ENCODE measurements at regions of chr22 and their contacts with region 1.

Region 1: DNA sequence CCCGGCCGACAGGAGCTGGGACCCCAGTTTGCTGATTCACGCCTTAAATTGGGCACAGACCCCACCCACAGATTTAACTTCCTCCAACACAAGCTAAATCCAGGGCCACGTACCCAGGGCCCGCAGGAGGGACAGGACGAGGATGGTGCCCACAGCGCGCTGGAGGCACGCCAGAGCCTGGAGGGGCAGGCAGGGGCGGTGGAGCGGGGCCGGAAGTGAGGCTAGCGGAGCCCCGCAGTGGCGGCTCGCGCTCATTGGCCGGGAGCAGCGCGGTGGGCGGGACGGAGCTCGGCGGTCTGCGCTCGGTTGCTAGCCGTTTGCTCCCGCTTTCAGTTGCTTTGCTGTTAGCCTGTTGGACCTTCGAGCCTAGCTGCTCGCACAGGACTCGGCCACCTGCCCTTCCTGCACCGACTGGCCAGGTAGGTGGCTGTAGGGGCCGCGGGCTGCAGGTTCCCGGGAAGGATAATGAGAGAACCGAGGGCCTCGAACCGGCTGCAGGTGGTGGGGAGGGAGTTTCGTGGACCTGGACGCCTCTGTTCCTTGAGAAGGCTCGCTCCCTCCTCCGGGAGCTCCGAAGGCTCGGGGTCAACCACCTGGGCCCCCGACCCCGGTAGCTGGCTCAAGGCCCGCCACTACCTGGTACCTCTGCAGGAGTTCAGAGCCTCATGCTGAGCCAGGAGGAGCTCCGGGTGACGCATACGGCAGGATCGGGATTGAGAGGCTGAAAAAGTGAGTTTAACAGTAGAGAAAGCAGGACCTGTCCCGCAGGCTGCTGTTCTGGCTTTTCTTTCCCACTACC is at the start of gene CCDC134:
- DNase-seq: peak; percentile 94
- ATAC-seq: peak; percentile 97
- H3K4me3 Mint-ChIP-seq: peak within 1 kb of the TSS; percentile 98
- H3K27ac Mint-ChIP-seq: peak within 1 kb of the TSS; percentile 97
- H3K4me1 Mint-ChIP-seq: peaks cover 40% of the 10 kb centered on the region
- H3K27me3 Mint-ChIP-seq: no peaks in the 10 kb centered on the region
- total RNA-seq, gene CCDC134: 28.2 to 29.2 TPM

Region 2: GRCh38 chr22:41697126-41697775 is 103.3 kb before region 1 on chr22:
- POLR2A ChIA-PET with region 1: interaction called, 15 read pairs
- DNase-seq: peak; percentile 96
- ATAC-seq: peak; percentile 65
- H3K4me3 Mint-ChIP-seq: peak overlapping the region; percentile 24
- H3K27ac Mint-ChIP-seq: peak overlapping the region; percentile 77
- H3K4me1 Mint-ChIP-seq: peaks cover 12% of the 10 kb centered on the region
- H3K27me3 Mint-ChIP-seq: peaks cover 3% of the 10 kb centered on the region

Region 3: DNA sequence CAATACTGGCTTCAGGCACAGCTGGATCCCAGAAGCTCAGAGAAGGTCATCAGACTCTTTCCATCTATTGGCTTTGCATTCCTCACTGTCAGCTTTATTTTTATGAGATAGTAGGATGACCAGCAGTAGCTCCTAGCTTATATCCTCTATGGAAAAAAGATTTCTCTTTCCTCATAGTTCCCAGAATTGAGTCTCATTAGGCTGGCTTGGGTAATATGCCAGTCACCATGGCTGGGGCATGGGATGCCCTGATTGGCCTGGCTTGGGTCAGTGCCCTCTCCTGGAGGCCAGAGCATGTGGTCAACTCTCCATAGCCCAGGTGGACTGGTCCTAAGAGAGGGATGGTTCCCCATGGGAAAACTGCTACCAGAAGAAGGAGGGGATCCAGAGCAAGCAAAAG is 14.1 kb before region 1 on chr22:
- POLR2A ChIA-PET with region 1: interaction called, 250 read pairs
- DNase-seq: no peak
- ATAC-seq: no peak
- H3K4me3 Mint-ChIP-seq: no peak overlapping the region
- H3K27ac Mint-ChIP-seq: no peak overlapping the region
- H3K4me1 Mint-ChIP-seq: peaks cover 26% of the 10 kb centered on the region
- H3K27me3 Mint-ChIP-seq: no peaks in the 10 kb centered on the region

Region 4: GRCh38 chr22:41940832-41941765 is 140.6 kb after region 1 on chr22:
- POLR2A ChIA-PET with region 1: interaction called, 25 read pairs
- DNase-seq: peak; percentile 88
- ATAC-seq: peak; percentile 75
- H3K4me3 Mint-ChIP-seq: peak overlapping the region; percentile 18
- H3K27ac Mint-ChIP-seq: peak overlapping the region; percentile 91
- H3K4me1 Mint-ChIP-seq: peaks cover 44% of the 10 kb centered on the region
- H3K27me3 Mint-ChIP-seq: no peaks in the 10 kb centered on the region

Measured in activated naive CD8-positive, alpha-beta T cell treated with anti-CD3 and anti-CD28 coated beads, Interleukin-2, amount 10 ng/mL, durations not matched to agents 7 days and 5 days (primary cell).